ENCODE measurements at regions of chr17 and their contacts with region 1.

Region 1: GRCh38 chr17:57243171-57243948 is 13.0 kb upstream of the MSI2 start:
- DNase-seq: peak; percentile 81
- ATAC-seq: peak; percentile 85
- H3K4me3 Mint-ChIP-seq: no peak overlapping the region
- H3K27ac Mint-ChIP-seq: no peak overlapping the region
- H3K4me1 Mint-ChIP-seq: peaks cover 6% of the 10 kb centered on the region
- H3K27me3 Mint-ChIP-seq: peaks cover 23% of the 10 kb centered on the region

Region 2: GRCh38 chr17:57255776-57256681 is 12.7 kb after region 1 on chr17 and contains the start of gene MSI2:
- CTCF ChIA-PET with region 1: interaction called, 44 read pairs
- DNase-seq: peak; percentile 96
- ATAC-seq: peak; percentile 86
- H3K4me3 Mint-ChIP-seq: peak within 1 kb of the TSS; percentile 82
- H3K27ac Mint-ChIP-seq: peak within 1 kb of the TSS; percentile 91
- H3K4me1 Mint-ChIP-seq: peaks cover 37% of the 10 kb centered on the region
- H3K27me3 Mint-ChIP-seq: no peaks in the 10 kb centered on the region
- total RNA-seq, gene MSI2: 117 to 120 TPM

Region 3: GRCh38 chr17:57401556-57402488 is 158.5 kb after region 1 on chr17:
- CTCF ChIA-PET with region 1: interaction called, 33 read pairs
- DNase-seq: no peak
- ATAC-seq: no peak
- H3K4me3 Mint-ChIP-seq: no peak overlapping the region
- H3K27ac Mint-ChIP-seq: no peak overlapping the region
- H3K4me1 Mint-ChIP-seq: peaks cover 5% of the 10 kb centered on the region
- H3K27me3 Mint-ChIP-seq: no peaks in the 10 kb centered on the region

Region 4: DNA sequence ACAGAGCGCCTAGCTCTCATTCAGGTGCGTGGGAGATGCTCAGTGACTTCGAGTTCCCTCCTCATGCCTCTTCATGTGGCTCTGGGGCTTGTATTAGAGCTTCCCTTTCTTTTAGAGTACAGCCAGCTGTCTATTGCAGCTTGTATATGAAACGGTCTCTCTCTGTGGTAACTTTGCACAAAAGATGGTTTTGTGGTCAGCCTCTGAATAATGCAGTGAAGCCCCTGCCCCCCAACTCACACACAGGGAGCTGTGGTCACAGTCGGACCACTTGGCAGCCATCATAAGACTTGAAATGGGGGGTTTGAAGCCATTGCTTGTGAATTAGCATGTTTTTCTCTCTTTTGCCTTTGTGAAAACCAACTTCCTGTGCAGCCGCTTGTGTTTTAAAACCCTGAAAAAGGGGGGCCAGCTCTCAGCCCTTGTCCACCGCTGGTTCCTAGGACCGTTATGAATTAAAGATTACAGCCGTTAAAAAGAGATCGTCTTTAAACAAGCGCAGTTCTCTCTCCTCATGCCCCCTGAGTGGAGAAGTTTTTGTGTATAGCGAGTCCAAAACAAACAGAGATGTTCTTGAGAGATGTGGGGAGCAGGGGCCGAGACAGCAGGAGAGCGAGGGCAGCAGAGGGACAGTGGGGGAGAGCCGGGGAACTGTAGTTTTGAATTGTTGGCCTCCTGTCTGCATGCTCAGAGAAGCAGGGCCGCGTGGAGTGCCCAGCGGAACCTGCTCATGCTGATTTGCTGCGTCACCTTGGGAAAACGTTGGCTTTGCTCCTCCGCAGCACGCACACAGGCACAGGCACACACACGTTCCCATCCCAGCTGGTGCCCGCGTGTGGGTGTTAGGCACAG is 211.9 kb after region 1 on chr17:
- CTCF ChIA-PET with region 1: interaction called, 26 read pairs
- DNase-seq: peak; percentile 87
- ATAC-seq: peak; percentile 70
- H3K4me3 Mint-ChIP-seq: peak overlapping the region; percentile 57
- H3K27ac Mint-ChIP-seq: peak overlapping the region; percentile 96
- H3K4me1 Mint-ChIP-seq: peaks cover 75% of the 10 kb centered on the region
- H3K27me3 Mint-ChIP-seq: no peaks in the 10 kb centered on the region

Region 5: DNA sequence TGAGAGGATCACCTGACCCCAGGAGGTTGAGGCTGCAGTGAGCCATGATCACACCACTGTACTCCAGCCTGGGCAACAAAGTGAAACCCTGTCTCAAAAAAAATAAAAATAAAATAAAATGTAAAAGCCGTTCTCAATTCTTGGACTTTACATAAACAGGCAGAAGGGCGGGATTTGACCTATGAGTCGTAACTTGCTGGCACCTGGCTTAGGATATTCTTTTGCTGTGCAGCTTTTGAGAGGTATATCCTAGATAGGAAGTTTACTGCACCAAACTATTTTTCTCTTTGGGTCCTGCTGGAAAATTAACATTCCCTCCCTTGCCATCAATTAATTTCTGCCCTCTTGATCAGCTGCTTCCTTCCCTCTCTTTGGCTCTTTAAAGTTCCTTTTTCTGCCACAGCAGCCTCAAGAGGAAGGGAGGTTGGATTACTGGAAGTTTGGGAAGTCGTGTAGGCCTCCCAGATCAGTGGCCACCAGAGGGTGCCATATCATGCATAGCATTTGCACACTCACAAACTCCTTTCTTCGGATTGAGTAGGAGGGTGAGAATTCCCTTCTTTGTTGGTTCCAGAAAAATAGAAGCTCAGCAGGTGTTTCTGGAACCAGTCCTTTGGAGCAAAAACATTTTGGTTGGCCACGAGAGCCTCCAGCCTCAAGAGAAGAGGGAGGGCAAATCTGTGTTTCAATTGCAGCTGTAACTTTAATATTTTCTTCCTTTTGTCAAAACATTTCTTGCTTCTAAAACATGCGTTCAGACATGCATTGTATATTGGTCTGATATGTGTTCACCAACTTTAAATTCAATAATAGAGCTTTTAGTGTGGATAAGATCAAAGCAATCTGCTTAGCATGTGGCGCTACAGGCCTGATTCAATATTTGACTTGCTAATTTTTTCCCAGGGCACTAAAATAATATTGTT is 354.4 kb after region 1 on chr17:
- CTCF ChIA-PET with region 1: interaction called, 16 read pairs
- DNase-seq: peak; percentile 57
- ATAC-seq: no peak
- H3K4me3 Mint-ChIP-seq: no peak overlapping the region
- H3K27ac Mint-ChIP-seq: peak overlapping the region; percentile 98
- H3K4me1 Mint-ChIP-seq: peaks cover 57% of the 10 kb centered on the region
- H3K27me3 Mint-ChIP-seq: no peaks in the 10 kb centered on the region

Region 6: GRCh38 chr17:57747221-57748017 is 504.1 kb after region 1 on chr17:
- CTCF ChIA-PET with region 1: interaction called, 54 read pairs
- DNase-seq: peak; percentile 57
- ATAC-seq: peak; percentile 74
- H3K4me3 Mint-ChIP-seq: no peak overlapping the region
- H3K27ac Mint-ChIP-seq: no peak overlapping the region
- H3K4me1 Mint-ChIP-seq: peaks cover 13% of the 10 kb centered on the region
- H3K27me3 Mint-ChIP-seq: peaks cover 11% of the 10 kb centered on the region